Activated naive CD8-positive, alpha-beta T cell treated with anti-CD3 and anti-CD28 coated beads, Interleukin-2, amount 10 ng/mL, durations not matched to agents 7 days and 5 days (primary cell): ENCODE measurements at regions of chr19 and their contacts with region 1.

Region 1: DNA sequence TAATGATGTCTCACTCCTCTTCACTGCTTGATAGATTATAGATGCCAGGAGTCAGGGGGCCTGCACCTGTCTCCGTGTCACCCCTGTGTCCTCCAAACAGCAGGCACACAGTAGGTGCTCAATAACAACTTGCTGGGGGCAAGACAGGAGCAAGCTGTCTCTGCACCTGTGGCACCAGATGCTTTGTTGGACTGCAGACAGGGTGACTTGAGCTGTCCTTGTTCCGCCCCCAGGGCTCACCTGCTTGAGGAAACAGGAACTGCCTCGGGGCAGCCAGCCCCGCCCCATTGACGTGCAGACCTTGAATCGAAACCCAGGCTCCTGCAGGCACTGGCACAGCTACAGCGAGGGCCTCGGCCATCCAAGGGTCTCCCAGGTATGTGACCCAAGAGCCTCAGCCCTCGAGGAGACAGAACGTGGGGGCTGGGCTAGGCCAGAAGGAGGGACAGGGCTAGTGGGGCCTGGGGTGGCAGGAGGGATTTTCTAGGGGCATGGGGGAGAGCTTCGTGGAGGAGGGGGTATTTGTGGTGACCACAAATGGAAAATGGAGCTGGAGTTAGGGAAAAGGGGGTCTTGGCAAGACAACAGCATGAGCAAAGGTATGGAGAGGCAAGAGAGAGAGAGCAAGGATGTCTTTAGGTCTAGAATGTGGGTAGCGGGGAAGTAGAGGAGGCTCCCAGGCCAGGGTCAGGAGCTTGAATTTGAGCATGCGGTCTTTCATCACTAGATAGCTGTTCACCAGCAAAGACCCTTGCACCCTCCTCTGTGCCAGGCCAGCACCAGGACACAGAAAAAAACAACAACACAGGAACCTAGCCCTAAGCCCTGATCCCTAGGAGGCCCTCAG is at the start of gene HSH2D:
- DNase-seq: peak; percentile 88
- ATAC-seq: peak; percentile 99
- H3K4me3 Mint-ChIP-seq: peak within 1 kb of the TSS; percentile 99
- H3K27ac Mint-ChIP-seq: peak within 1 kb of the TSS; percentile 100
- H3K4me1 Mint-ChIP-seq: peaks cover 46% of the 10 kb centered on the region
- H3K27me3 Mint-ChIP-seq: no peaks in the 10 kb centered on the region
- total RNA-seq, gene HSH2D: 72.5 to 80.6 TPM

Region 2: DNA sequence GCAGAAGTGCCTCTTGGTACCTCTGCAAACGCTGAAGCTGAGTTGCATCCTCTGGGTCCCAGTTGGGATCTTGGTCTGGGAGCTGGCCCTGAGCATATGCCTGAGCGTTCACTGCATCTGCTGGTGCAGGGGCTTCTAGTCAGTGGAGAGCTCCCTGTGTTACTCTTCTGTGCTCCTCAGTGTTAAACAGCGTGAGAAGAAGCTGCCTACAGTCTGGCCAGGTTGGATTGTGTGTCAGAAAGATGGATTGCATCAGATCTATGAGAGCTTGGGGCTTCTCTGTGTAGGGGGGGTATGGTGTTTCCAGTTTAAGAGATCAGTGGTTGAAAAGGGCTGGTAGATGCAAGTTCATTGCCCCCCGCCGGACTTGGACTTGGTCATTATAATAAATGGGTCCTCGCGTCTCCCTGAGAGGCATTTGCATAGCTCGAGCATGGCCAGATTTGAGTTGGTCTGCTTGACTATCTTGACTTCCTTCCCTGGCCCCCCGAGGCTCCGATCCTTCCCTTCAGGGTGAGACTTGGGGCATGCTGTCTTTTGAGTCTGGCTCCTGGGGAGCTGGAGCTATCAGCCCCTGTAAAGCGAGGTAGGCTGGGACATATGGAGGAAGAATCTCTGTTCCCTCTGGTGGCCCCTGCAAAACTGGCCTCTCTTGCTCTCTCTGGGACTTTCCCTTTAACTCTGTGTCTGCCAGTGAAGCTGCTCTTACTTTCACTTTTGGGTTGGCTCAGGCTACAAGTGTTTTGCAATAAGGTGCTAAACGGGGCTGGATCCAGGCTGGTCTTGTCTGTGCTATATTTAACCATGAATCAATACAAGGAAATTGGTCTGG is 141.9 kb before region 1 on chr19:
- POLR2A ChIA-PET with region 1: interaction called, 10 read pairs
- DNase-seq: peak; percentile 58
- ATAC-seq: peak; percentile 96
- H3K4me3 Mint-ChIP-seq: peak overlapping the region; percentile 84
- H3K27ac Mint-ChIP-seq: peak overlapping the region; percentile 93
- H3K4me1 Mint-ChIP-seq: peaks cover 24% of the 10 kb centered on the region
- H3K27me3 Mint-ChIP-seq: no peaks in the 10 kb centered on the region

Region 3: DNA sequence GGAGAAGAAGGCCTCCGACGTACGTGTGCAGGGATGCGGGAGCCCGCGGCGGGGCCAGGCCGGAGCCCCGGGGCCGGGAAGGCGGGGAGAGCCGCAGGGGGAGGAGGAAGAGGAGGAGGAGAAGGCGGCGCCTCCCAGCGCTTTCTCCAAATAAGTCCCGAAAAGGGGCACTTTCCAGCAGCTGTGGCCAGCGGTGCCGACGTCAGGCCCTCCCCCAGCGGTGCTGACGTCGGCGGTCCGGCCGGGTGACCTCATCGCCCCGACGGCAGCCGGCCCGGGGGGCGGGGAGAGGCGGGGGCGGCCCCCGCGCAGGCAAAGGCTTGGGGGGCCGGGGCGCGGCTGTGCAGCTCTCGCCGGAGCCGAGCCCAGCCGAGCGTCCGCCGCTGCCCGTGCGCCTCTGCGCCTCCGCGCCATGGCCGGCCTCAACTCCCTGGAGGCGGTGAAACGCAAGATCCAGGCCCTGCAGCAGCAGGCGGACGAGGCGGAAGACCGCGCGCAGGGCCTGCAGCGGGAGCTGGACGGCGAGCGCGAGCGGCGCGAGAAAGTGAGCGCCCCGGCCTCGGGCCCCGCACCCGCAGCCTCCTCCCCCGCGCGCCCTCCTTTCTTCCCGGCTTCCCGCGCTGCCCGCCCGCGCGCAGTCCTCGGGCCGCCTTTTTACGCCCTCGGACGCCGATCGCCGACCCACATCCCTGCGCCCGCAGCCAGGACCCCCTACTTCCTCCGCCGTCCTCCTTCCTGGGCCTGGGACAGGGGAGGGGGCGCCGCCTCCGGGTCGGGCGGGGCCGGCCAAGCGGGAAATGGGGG is 67.3 kb before region 1 on chr19 and contains the start of gene TPM4:
- POLR2A ChIA-PET with region 1: interaction called, 65 read pairs
- DNase-seq: peak; percentile 93
- ATAC-seq: peak; percentile 63
- H3K4me3 Mint-ChIP-seq: peak within 1 kb of the TSS; percentile 89
- H3K27ac Mint-ChIP-seq: peak within 1 kb of the TSS; percentile 93
- H3K4me1 Mint-ChIP-seq: peaks cover 61% of the 10 kb centered on the region
- H3K27me3 Mint-ChIP-seq: no peaks in the 10 kb centered on the region
- total RNA-seq, gene TPM4: 278 to 282 TPM

Region 4: GRCh38 chr19:16111160-16111908 is 32.3 kb before region 1 on chr19 and contains the start of gene RAB8A:
- POLR2A ChIA-PET with region 1: interaction called, 30 read pairs
- DNase-seq: peak; percentile 100
- ATAC-seq: peak; percentile 95
- H3K4me3 Mint-ChIP-seq: peak within 1 kb of the TSS; percentile 95
- H3K27ac Mint-ChIP-seq: peak within 1 kb of the TSS; percentile 97
- H3K4me1 Mint-ChIP-seq: peaks cover 27% of the 10 kb centered on the region
- H3K27me3 Mint-ChIP-seq: no peaks in the 10 kb centered on the region
- total RNA-seq, gene RAB8A: 133 to 153 TPM

Region 5: GRCh38 chr19:16153582-16154336 is 10.1 kb after region 1 on chr19:
- POLR2A ChIA-PET with region 1: interaction called, 30 read pairs
- DNase-seq: no peak
- ATAC-seq: no peak
- H3K4me3 Mint-ChIP-seq: no peak overlapping the region
- H3K27ac Mint-ChIP-seq: no peak overlapping the region
- H3K4me1 Mint-ChIP-seq: peaks cover 37% of the 10 kb centered on the region
- H3K27me3 Mint-ChIP-seq: no peaks in the 10 kb centered on the region

Region 6: GRCh38 chr19:16185123-16185767 is 41.6 kb after region 1 on chr19 and contains the start of gene FAM32A:
- POLR2A ChIA-PET with region 1: interaction called, 16 read pairs
- DNase-seq: peak; percentile 95
- ATAC-seq: peak; percentile 96
- H3K4me3 Mint-ChIP-seq: peak within 1 kb of the TSS; percentile 95
- H3K27ac Mint-ChIP-seq: peak within 1 kb of the TSS; percentile 92
- H3K4me1 Mint-ChIP-seq: peaks cover 19% of the 10 kb centered on the region
- H3K27me3 Mint-ChIP-seq: peaks cover 2% of the 10 kb centered on the region
- total RNA-seq, gene FAM32A: 61.4 to 63.4 TPM